T-cell (primary cell): ENCODE measurements at regions of chr15 and their contacts with region 1.

Region 1: GRCh38 chr15:41774062-41774881 is at the start of gene MAPKBP1:
- DNase-seq: peak; percentile 95 to 100 (median 97)
- ATAC-seq: peak; percentile 89 to 95 (median 92)
- H3K4me3 ChIP-seq: peak within 1 kb of the TSS; percentile 86 to 89
- H3K4me3 Mint-ChIP-seq: peak within 1 kb of the TSS; percentile 93 to 95 (median 94)
- H3K27ac ChIP-seq: peak within 1 kb of the TSS; percentile 81
- H3K27ac Mint-ChIP-seq: peak within 1 kb of the TSS; percentile 93 to 96
- H3K4me1 ChIP-seq: peaks cover 31 to 42% of the 10 kb centered on the region in 2 experiments
- H3K4me1 Mint-ChIP-seq: peaks cover 58 to 65% (median 63%) of the 10 kb centered on the region in 3 donors
- H3K27me3 ChIP-seq: no peaks in the 10 kb centered on the region
- H3K27me3 Mint-ChIP-seq: no peaks in the 10 kb centered on the region
- total RNA-seq, gene MAPKBP1: 37.0 to 44.8 (median 38.2) TPM

Region 2: DNA sequence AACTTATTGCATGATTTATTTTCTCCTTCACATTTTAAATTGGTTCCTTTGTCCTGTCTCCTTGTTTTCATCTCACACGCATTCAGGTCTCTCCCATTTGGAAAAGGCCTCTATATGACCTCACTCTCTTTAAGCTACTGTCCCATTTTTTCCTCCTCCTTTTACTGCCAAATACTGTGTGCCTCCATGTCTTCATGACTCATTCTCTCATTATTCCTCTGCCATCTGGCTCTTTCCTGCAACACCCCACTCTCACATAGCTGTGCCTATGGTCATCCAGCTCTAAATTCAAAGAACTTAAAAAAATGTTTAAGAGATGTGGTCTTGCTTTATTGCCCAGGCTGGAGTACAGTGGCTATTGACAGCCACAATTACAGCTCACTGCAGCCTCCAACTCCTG is 167.2 kb before region 1 on chr15:
- CTCF ChIA-PET with region 1: interaction called in 1 of 2 experiments, 5 read pairs
- POLR2A ChIA-PET with region 1: interaction called in 1 of 2 experiments, 18 read pairs
- DNase-seq: no peak
- ATAC-seq: no peak
- H3K4me3 ChIP-seq: no peak overlapping the region
- H3K4me3 Mint-ChIP-seq: no peak overlapping the region
- H3K27ac ChIP-seq: no peak overlapping the region
- H3K27ac Mint-ChIP-seq: no peak overlapping the region
- H3K4me1 ChIP-seq: peaks cover 0 to 7% of the 10 kb centered on the region in 2 experiments
- H3K4me1 Mint-ChIP-seq: peaks cover 8 to 10% (median 9%) of the 10 kb centered on the region in 3 donors
- H3K27me3 ChIP-seq: peaks cover 0 to 11% of the 10 kb centered on the region in 2 experiments
- H3K27me3 Mint-ChIP-seq: peaks cover 7 to 15% of the 10 kb centered on the region in 2 donors

Region 3: DNA sequence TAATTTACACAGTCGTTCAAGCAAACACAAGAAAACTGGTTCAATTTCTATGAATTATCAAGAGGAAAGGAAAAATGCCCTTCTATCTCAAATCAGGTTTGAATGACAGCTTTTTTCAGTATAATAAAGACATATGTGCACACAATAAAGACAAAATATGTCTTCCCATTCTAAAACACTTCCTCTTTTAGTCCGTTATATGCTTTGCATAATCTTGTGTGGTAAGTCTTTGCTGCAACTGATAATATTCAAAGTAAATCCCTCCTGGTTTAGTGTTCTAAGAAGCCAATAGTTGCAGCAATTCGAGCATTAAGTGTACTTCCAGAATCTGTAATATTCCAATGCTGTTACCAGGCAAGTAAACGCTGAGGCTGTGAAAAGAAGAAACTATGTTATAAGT is 43.7 kb before region 1 on chr15:
- CTCF ChIA-PET with region 1: no interaction called
- POLR2A ChIA-PET with region 1: no interaction called
- DNase-seq: no peak
- ATAC-seq: no peak
- H3K4me3 ChIP-seq: no peak overlapping the region
- H3K4me3 Mint-ChIP-seq: no peak overlapping the region
- H3K27ac ChIP-seq: no peak overlapping the region
- H3K27ac Mint-ChIP-seq: no peak overlapping the region
- H3K4me1 ChIP-seq: no peaks in the 10 kb centered on the region
- H3K4me1 Mint-ChIP-seq: peaks cover 0 to 2% (median 0%) of the 10 kb centered on the region in 3 donors
- H3K27me3 ChIP-seq: no peaks in the 10 kb centered on the region
- H3K27me3 Mint-ChIP-seq: no peaks in the 10 kb centered on the region

Region 4: GRCh38 chr15:41827880-41828806 is 53.9 kb after region 1 on chr15 and contains the start of gene JMJD7:
- CTCF ChIA-PET with region 1: interaction called in 1 of 2 experiments, 17 read pairs
- POLR2A ChIA-PET with region 1: interaction called in 1 of 2 experiments, 6 read pairs
- DNase-seq: peak; percentile 81 to 98 (median 94)
- ATAC-seq: peak; percentile 89 to 95 (median 92)
- H3K4me3 ChIP-seq: peak within 1 kb of the TSS; percentile 85 to 91
- H3K4me3 Mint-ChIP-seq: peak within 1 kb of the TSS; percentile 91 to 97 (median 95)
- H3K27ac ChIP-seq: peak within 1 kb of the TSS; percentile 59
- H3K27ac Mint-ChIP-seq: peak within 1 kb of the TSS; percentile 86 to 91
- H3K4me1 ChIP-seq: peaks cover 20 to 54% of the 10 kb centered on the region in 2 experiments
- H3K4me1 Mint-ChIP-seq: peaks cover 45 to 57% (median 55%) of the 10 kb centered on the region in 3 donors
- H3K27me3 ChIP-seq: no peaks in the 10 kb centered on the region
- H3K27me3 Mint-ChIP-seq: no peaks in the 10 kb centered on the region
- total RNA-seq, gene JMJD7: 35.8 to 72.7 (median 45.3) TPM

Region 5: GRCh38 chr15:41904541-41905005 is 130.3 kb after region 1 on chr15:
- CTCF ChIA-PET with region 1: interaction called, 17 to 113 read pairs
- POLR2A ChIA-PET with region 1: interaction called in 1 of 2 experiments, 6 read pairs
- DNase-seq: peak; percentile 38 to 86 (median 63)
- ATAC-seq: peak; percentile 77 to 88 (median 86)
- H3K4me3 ChIP-seq: no peak overlapping the region
- H3K4me3 Mint-ChIP-seq: no peak overlapping the region
- H3K27ac ChIP-seq: no peak overlapping the region
- H3K27ac Mint-ChIP-seq: peak overlapping the region; percentile 66 to 67
- H3K4me1 ChIP-seq: peaks cover 0 to 10% of the 10 kb centered on the region in 2 experiments
- H3K4me1 Mint-ChIP-seq: peaks cover 7 to 10% (median 9%) of the 10 kb centered on the region in 3 donors
- H3K27me3 ChIP-seq: no peaks in the 10 kb centered on the region
- H3K27me3 Mint-ChIP-seq: no peaks in the 10 kb centered on the region

Region 6: GRCh38 chr15:41972253-41973242 is 198.3 kb after region 1 on chr15 and contains the start of gene EHD4:
- CTCF ChIA-PET with region 1: interaction called in 1 of 2 experiments, 16 read pairs
- POLR2A ChIA-PET with region 1: interaction called in 1 of 2 experiments, 8 read pairs
- DNase-seq: peak; percentile 83 to 98 (median 93)
- ATAC-seq: peak; percentile 85 to 92 (median 90)
- H3K4me3 ChIP-seq: peak within 1 kb of the TSS; percentile 77
- H3K4me3 Mint-ChIP-seq: peak within 1 kb of the TSS; percentile 87 to 92 (median 92)
- H3K27ac ChIP-seq: peak within 1 kb of the TSS; percentile 66
- H3K27ac Mint-ChIP-seq: peak within 1 kb of the TSS; percentile 88 to 89
- H3K4me1 ChIP-seq: peaks cover 25 to 28% of the 10 kb centered on the region in 2 experiments
- H3K4me1 Mint-ChIP-seq: peaks cover 42 to 48% (median 44%) of the 10 kb centered on the region in 3 donors
- H3K27me3 ChIP-seq: peaks cover 0 to 5% of the 10 kb centered on the region in 2 experiments
- H3K27me3 Mint-ChIP-seq: peaks cover 8 to 12% of the 10 kb centered on the region in 2 donors
- total RNA-seq, gene EHD4: 11.7 to 46.8 (median 16.8) TPM